Heart right ventricle (tissue), 16 donors: ENCODE measurements at regions of chr18 and their contacts with region 1.

Region 1: DNA sequence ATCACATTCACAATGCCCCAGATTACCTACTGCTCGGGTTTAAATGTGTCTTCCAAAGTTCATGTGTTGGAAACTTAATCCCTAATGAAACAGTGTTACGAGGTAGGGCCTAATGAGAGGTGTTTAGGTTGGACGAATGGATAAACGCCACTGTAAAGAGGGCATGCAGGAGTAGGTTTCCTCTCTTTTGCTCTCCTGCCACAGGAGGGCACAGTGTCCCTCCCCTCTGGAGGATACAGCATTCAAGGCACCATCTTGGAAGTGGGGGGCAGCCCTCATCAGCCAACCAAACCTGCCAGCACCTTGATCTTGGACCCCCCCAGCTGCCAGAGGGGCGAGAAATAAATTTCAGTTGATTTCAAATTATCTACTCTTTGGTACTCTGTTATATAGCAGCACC is 103.5 kb downstream of the TSHZ1 start:
- DNase-seq: no peak
- ATAC-seq: no peak
- H3K4me3 ChIP-seq: no peak overlapping the region
- H3K27ac ChIP-seq: no peak overlapping the region
- H3K4me1 ChIP-seq: no peaks in the 10 kb centered on the region
- H3K27me3 ChIP-seq: no peaks in the 10 kb centered on the region
- CTCF ChIP-seq: peak in 1 of 9 donors; percentile 8

Region 2: DNA sequence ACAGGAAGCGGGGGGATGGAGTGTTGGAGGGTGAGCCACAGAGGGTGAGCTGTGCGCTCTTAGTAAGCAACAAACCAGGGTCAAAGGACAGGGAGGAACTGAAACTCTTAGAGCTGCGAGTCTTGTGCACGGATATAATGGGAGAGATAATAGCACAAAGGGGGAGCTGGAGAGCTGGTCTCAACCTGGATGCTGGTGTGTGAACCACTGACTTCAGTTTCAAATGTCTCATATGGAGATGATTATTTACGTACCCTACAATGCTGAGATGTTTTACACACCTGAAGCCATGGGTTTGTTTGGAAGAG is 141.0 kb before region 1 on chr18:
- intact Hi-C with region 1: no loop called
- DNase-seq: no peak
- ATAC-seq: no peak
- H3K4me3 ChIP-seq: no peak overlapping the region
- H3K27ac ChIP-seq: peak overlapping the region in 2 of 10 donors; percentile 26 to 86
- H3K4me1 ChIP-seq: peaks cover 5 to 43% (median 14%) of the 10 kb centered on the region in 9 donors
- H3K27me3 ChIP-seq: no peaks in the 10 kb centered on the region
- CTCF ChIP-seq: peak in 3 of 9 donors; percentile 15 to 31 (median 17)

Region 3: GRCh38 chr18:75247611-75248421 is 66.3 kb before region 1 on chr18:
- intact Hi-C with region 1: loop called in 1 of 10 experiments (anchors 10 kb)
- DNase-seq: peak in 1 of 2 donors; percentile 20
- ATAC-seq: peak in 7 of 8 donors; percentile 37 to 78 (median 61)
- H3K4me3 ChIP-seq: peak overlapping the region in 9 of 10 donors; percentile 14 to 52 (median 40)
- H3K27ac ChIP-seq: peak overlapping the region; percentile 14 to 85 (median 76)
- H3K4me1 ChIP-seq: peaks cover 4 to 63% (median 39%) of the 10 kb centered on the region in 9 donors
- H3K27me3 ChIP-seq: no peaks in the 10 kb centered on the region
- CTCF ChIP-seq: no peak

Region 4: GRCh38 chr18:75350512-75350839 is 36.4 kb after region 1 on chr18:
- intact Hi-C with region 1: no loop called
- DNase-seq: no peak
- ATAC-seq: no peak
- H3K4me3 ChIP-seq: no peak overlapping the region
- H3K27ac ChIP-seq: no peak overlapping the region
- H3K4me1 ChIP-seq: no peaks in the 10 kb centered on the region
- H3K27me3 ChIP-seq: peaks cover 0 to 6% (median 0%) of the 10 kb centered on the region in 7 donors
- CTCF ChIP-seq: no peak